PC-9 (cell line): ENCODE measurements at regions of chr11 and their contacts with region 1.

Region 1: GRCh38 chr11:109037856-109038780 is 373.2 kb downstream of the DDX10 start:
- DNase-seq: no peak
- H3K4me3 ChIP-seq: no peak overlapping the region
- H3K27ac ChIP-seq: no peak overlapping the region
- H3K4me1 ChIP-seq: no peaks in the 10 kb centered on the region
- H3K27me3 ChIP-seq: no peaks in the 10 kb centered on the region
- CTCF ChIP-seq: no peak

Region 2: GRCh38 chr11:108963118-108963517 is 75.0 kb before region 1 on chr11:
- CTCF ChIA-PET with region 1: no interaction called
- POLR2A ChIA-PET with region 1: no interaction called
- intact Hi-C with region 1: loop called (anchors 2 kb)
- DNase-seq: peak in 1 of 2 experiments; percentile 32
- H3K4me3 ChIP-seq: no peak overlapping the region
- H3K27ac ChIP-seq: no peak overlapping the region
- H3K4me1 ChIP-seq: peaks cover 6% of the 10 kb centered on the region; the same call in 1 of the 2 replicates
- H3K27me3 ChIP-seq: no peaks in the 10 kb centered on the region
- CTCF ChIP-seq: no peak

Region 3: GRCh38 chr11:108994887-108995286 is 43.2 kb before region 1 on chr11:
- CTCF ChIA-PET with region 1: no interaction called
- POLR2A ChIA-PET with region 1: no interaction called
- intact Hi-C with region 1: no loop called
- DNase-seq: no peak
- H3K4me3 ChIP-seq: no peak overlapping the region
- H3K27ac ChIP-seq: no peak overlapping the region
- H3K4me1 ChIP-seq: no peaks in the 10 kb centered on the region
- H3K27me3 ChIP-seq: no peaks in the 10 kb centered on the region
- CTCF ChIP-seq: no peak

Region 4: DNA sequence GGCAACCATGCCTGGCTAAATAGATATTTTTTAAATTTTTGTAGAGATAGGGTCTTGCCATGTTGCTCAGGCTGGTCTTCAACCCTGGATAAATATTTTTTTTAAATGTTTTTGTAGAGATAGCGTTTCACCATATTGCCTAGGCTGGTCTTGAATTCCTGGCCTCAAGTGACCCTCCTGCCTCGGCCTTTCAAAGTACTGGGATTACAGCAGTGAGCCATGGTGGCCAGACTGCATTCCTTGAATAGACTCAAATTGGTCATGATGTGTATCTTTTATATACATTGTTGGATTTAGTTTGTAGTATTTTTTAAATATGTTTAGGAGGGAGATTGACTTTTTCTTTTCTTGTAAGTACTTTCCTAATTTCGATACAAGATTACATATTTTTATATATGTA is 58.2 kb after region 1 on chr11:
- CTCF ChIA-PET with region 1: no interaction called
- POLR2A ChIA-PET with region 1: no interaction called
- intact Hi-C with region 1: loop called (anchors 10 kb)
- DNase-seq: no peak
- H3K4me3 ChIP-seq: no peak overlapping the region
- H3K27ac ChIP-seq: no peak overlapping the region
- H3K4me1 ChIP-seq: no peaks in the 10 kb centered on the region
- H3K27me3 ChIP-seq: no peaks in the 10 kb centered on the region
- CTCF ChIP-seq: no peak